T-cell (primary cell): ENCODE measurements at regions of chr10 and their contacts with region 1.

Region 1: DNA sequence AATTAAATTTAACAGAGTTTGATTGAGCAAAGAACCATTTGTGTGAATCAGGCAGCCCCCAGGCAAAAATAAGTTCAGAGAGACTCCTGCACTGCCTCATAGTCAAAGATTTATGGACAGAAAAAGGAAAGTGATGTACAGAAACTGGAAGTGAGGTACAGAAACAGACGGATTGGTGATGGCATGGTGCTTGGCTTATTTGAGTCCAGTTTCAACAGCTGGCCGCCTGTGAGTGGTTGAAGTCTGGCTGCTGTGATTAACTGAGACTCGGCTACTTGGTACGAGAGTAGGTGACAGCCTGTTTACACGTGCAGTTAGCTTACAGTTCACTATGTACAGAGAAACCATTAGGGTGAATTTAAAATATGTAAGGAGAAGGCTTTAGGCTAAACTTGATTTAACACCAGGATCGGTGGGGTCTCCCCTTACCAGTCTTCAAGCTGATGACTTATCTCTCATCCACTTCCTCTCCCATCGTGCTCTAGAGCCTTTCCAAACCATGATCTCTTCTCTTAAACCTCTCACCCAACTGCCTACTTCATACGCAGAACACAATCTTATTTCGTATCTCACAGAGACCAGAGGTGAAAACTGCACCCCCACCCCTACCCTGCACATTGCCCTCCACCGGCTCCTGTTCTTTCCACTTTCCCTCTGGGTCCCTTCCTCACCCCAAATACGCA is 5.0 kb upstream of the MSMB start:
- DNase-seq: no peak
- ATAC-seq: no peak
- H3K4me3 ChIP-seq: no peak overlapping the region
- H3K4me3 Mint-ChIP-seq: no peak overlapping the region
- H3K27ac ChIP-seq: no peak overlapping the region
- H3K27ac Mint-ChIP-seq: no peak overlapping the region
- H3K4me1 ChIP-seq: peaks cover 0 to 4% of the 10 kb centered on the region in 2 experiments
- H3K4me1 Mint-ChIP-seq: peaks cover 0 to 7% (median 0%) of the 10 kb centered on the region in 3 donors
- H3K27me3 ChIP-seq: peaks cover 0 to 10% of the 10 kb centered on the region in 2 experiments
- H3K27me3 Mint-ChIP-seq: peaks cover 0 to 3% of the 10 kb centered on the region in 2 donors

Region 2: DNA sequence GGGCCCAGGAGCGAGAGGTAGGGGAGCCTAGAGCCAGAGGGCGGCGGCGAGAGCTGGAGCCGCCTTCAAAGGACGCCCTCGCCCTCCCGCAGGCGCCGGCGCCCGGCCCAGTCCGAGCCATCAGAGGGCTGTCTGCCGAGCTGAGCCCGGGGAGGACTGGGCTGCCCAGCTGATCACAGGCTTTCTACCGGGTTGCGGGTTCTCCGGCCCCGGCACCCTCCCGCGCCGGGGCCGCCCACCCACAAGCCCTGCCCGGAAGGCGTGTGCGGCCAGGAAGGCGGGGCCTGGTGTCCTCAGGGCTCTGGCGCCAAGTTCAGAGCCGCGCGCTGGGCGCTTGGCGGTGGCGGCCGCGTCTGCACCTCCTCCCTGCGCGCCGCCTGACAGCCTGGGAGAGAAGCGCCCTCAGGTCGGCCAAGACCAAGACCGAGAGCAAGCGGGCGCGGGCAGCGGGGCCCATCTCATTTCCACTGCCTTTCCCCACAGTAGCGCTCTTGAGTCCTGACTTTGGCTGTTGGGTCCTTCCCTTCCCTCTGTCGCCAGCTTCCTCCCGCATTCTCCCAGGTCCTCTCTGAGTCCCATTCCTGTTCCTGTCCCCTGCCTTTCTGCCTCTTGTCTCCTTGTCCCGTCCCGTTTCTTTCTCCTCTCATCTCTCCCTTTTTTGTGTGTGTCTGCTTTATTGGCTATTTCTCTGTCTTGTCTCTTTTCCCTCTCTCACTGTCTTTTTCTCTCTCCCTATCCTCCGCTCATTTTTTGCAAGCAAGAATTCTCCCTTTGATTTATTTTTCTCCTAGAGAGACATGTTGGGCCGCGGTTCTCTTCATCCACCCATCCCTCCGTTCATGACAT is 55.6 kb after region 1 on chr10:
- CTCF ChIA-PET with region 1: interaction called in 1 of 2 experiments, 12 read pairs
- POLR2A ChIA-PET with region 1: no interaction called
- DNase-seq: peak in 13 of 35 experiments; percentile 28 to 60 (median 48)
- ATAC-seq: peak; percentile 90 to 95 (median 91)
- H3K4me3 ChIP-seq: peak overlapping the region; percentile 36 to 55
- H3K4me3 Mint-ChIP-seq: peak overlapping the region; percentile 75 to 89 (median 85)
- H3K27ac ChIP-seq: no peak overlapping the region
- H3K27ac Mint-ChIP-seq: peak overlapping the region; percentile 23 to 83
- H3K4me1 ChIP-seq: peaks cover 2 to 15% of the 10 kb centered on the region in 2 experiments
- H3K4me1 Mint-ChIP-seq: peaks cover 14 to 20% (median 15%) of the 10 kb centered on the region in 3 donors
- H3K27me3 ChIP-seq: peaks cover 0 to 7% of the 10 kb centered on the region in 2 experiments
- H3K27me3 Mint-ChIP-seq: peaks cover 0 to 6% of the 10 kb centered on the region in 2 donors